ENCODE measurements at regions of chr10 and their contacts with region 1.

Region 1: GRCh38 chr10:102729029-102730026 is 14.4 kb upstream of the WBP1L start:
- DNase-seq: peak; percentile 94
- H3K4me3 ChIP-seq: no peak overlapping the region
- H3K27ac ChIP-seq: peak overlapping the region in 1 of 4 donors; percentile 2
- H3K4me1 ChIP-seq: peaks cover 0 to 11% (median 3%) of the 10 kb centered on the region in 4 donors
- H3K27me3 ChIP-seq: no peaks in the 10 kb centered on the region
- CTCF ChIP-seq: peak; percentile 89 to 92 (median 91)
- EP300 ChIP-seq: no peak
- POLR2A ChIP-seq: no peak

Region 2: DNA sequence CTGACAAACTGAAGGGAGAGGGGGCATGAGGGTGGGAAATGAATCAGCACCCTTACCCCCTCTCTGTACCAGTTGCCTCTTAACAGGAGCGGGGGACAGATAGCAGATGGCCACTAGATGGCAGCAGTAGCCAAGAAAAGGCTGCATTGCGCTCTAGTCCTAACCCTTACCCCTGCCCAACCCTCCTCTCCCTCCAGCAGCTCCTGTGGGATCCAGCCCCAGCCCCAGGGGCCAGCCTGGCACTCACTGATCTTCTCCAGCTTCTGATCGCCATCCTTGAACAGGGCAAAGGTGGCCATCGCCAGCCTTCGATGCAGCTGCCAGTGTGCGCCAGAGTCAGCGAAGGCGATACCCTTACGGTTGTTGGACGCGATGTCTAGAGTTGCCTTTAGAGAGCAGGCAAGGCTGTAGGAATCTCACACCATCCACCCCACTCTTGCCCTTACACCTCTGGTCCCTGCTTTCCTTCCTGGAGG is 105.7 kb after region 1 on chr10:
- intact Hi-C with region 1: loop called (anchors 5 kb)
- DNase-seq: peak; percentile 89
- H3K4me3 ChIP-seq: no peak overlapping the region
- H3K27ac ChIP-seq: no peak overlapping the region
- H3K4me1 ChIP-seq: peaks cover 0 to 8% (median 3%) of the 10 kb centered on the region in 4 donors
- H3K27me3 ChIP-seq: no peaks in the 10 kb centered on the region
- CTCF ChIP-seq: peak; percentile 66 to 89 (median 84)
- EP300 ChIP-seq: no peak
- POLR2A ChIP-seq: no peak

Region 3: GRCh38 chr10:102904346-102904745 is 175.0 kb after region 1 on chr10:
- intact Hi-C with region 1: loop called (anchors 1 kb)
- DNase-seq: no peak
- H3K4me3 ChIP-seq: no peak overlapping the region
- H3K27ac ChIP-seq: no peak overlapping the region
- H3K4me1 ChIP-seq: no peaks in the 10 kb centered on the region
- H3K27me3 ChIP-seq: no peaks in the 10 kb centered on the region
- CTCF ChIP-seq: no peak
- EP300 ChIP-seq: no peak
- POLR2A ChIP-seq: no peak

Region 4: DNA sequence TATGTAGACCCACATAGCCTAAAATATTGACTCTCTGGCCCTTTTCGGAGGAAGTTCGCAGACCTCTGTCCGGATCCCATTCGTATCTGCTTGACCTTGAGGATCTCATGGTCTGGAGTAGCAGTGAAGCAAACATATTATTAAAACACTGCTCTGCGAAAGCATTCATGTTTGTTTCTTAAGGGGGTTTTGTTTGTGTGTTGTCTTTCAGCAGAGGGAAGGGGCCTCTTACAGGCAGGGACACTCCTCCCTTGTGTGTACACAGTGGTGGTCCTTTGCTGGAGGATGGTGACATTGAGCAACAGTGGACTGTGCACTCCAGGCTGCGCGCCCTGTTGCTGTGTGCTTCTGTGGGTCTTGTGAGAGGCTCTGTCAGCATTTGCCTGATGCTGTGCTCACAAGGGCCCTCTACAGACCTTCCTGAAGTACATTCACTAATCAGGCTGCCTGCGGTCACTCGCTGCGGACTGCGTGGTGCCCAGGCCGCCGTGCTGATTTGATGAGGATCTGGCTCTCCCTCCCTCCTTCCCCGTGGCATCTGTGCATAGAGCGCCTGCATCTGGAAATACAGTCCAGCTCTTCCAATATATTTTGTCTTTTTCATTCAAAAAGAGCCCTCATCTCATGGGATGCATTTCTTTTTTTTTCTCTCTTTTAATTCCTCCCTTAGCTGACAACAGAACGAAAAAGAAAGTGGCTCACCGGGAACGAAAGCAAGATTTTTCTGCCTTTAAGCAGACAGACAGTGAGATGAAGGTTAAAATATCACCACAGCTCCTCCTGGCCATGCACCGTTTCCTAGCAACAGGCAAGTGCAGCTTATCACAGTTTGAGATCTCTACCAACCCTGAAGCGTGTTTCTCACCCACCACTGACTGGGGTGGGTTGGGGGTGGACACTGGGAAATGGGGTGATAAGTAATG is 324.6 kb after region 1 on chr10:
- intact Hi-C with region 1: loop called (anchors 10 kb)
- DNase-seq: peak; percentile 82
- H3K4me3 ChIP-seq: peak overlapping the region in 3 of 4 donors; percentile 27 to 34 (median 31)
- H3K27ac ChIP-seq: peak overlapping the region in 3 of 4 donors; percentile 34 to 58 (median 39)
- H3K4me1 ChIP-seq: peaks cover 0 to 12% (median 4%) of the 10 kb centered on the region in 4 donors
- H3K27me3 ChIP-seq: no peaks in the 10 kb centered on the region
- CTCF ChIP-seq: no peak
- EP300 ChIP-seq: no peak
- POLR2A ChIP-seq: no peak

Measured in sigmoid colon (tissue), 7 donors.